ENCODE measurements at regions of chr9 and their contacts with region 1.

Region 1: DNA sequence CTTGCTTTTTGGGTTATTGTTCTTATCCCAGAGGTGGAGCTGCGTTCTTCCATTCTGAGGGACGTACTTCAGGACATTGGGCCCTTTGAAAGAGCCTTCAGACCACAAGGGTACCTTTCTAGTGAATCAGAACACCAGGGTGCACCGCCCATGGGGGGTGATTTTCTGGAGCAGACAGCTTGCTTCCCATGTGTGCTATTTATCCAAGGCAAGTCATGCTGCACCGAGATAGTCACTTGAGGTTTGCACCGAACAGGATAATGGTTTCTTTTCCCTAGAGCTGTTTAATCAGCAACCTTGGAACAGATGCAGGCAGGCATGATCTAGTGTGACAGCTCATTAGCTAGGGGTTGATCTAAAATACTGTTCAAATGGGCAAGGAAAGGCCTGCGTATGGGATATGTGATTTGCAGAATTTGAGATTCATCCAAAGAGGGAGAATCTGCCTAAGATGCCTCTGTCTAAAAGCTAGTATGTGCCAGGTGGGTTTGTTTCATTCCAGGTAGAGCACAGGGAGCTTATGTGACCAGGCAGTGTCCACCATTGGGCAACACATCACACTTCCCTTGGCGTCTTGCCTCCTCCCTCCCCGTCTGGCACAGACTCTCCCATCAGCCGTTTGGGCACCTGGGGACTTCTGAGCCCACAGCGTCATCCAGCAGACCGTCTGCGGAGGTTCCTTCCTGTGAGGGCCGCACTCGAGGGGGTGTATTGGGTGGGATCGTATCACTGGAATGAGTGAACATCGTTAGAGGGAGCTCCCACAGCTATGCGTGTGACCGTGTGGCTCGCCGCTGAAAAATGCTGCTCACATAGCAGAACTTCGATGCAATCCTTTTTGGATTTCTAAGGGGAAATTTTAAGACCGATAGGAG is 23.0 kb downstream of the ABL1 start:
- DNase-seq: peak; percentile 72

Region 2: DNA sequence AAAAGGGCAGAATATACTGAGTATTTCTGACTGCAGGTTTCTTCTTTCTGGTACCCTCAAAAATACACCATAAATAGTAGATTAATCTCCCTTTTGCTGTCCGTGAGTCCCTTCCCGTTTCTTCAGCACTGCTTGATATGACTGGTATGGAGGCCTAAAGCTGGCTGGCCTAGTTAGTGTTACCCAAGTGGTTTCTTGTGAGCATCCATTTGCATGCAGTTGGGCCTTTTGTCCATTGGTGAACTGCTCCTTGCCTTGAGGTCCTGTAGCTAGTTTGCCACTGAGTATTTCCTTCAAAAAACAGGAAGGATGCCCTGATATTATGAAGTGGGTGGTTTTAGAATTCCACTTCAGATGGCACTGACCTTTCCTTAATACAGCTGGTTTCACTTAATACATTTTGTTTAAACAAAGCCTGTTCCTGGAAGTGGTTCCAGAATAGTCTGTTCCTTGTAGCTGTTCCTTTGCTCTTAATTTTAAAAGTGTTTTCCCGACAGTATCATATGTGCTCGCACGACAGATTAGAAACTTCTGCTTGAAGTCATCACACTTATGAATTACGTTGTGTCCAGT is 63.1 kb before region 1 on chr9:
- in situ Hi-C with region 1: loop called (anchors 10 kb)
- DNase-seq: no peak

Measured in Caki2 (cell line).